H1 (cell line): ENCODE measurements at regions of chr7 and their contacts with region 1.

Region 1: GRCh38 chr7:99740573-99741440 is 5.8 kb upstream of the CYP3A7 start:
- DNase-seq: no peak
- H3K4me3 ChIP-seq: no peak overlapping the region
- H3K27ac ChIP-seq: no peak overlapping the region
- H3K4me1 ChIP-seq: peaks cover 0 to 7% (median 2%) of the 10 kb centered on the region in 4 experiments; a peak in 3 of 7 replicates
- H3K27me3 ChIP-seq: no peaks in the 10 kb centered on the region
- CTCF ChIP-seq: no peak
- EP300 ChIP-seq: no peak
- POLR2A ChIP-seq: no peak
- RAD21 ChIP-seq: no peak

Region 2: DNA sequence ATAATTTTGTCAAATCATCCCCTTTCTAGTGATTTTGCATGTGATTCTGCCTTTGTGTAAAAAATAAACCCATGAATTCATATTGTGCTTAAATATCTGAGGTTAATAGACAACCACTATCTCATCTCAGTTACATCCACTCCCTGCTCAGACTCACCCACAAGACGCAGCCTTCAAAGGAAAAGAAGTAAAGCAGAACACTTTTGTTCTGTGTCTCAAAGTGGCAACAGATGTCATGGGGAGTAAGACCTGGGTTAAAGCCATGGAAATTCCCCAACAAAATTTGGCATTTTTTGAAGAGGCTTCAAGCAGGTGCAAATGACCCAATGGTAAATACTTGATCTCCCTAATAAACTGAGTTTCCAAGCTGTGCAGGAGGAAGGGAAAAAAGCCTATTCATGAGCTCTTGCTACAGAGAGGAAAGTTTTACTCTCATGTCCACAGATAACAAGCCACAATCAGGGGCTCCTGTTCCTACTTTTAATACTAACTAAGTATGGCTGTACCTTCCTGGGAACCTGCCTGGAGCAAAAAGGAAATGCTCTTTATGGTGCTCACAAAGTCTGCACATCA is 10.5 kb before region 1 on chr7:
- CTCF ChIA-PET with region 1: interaction called, 11 read pairs
- POLR2A ChIA-PET with region 1: interaction called, 4 read pairs
- DNase-seq: no peak
- H3K4me3 ChIP-seq: no peak overlapping the region
- H3K27ac ChIP-seq: no peak overlapping the region
- H3K4me1 ChIP-seq: no peaks in the 10 kb centered on the region
- H3K27me3 ChIP-seq: no peaks in the 10 kb centered on the region
- CTCF ChIP-seq: no peak
- EP300 ChIP-seq: no peak
- POLR2A ChIP-seq: no peak
- RAD21 ChIP-seq: no peak